GM10248 (cell line): ENCODE measurements at regions of chr1 and their contacts with region 1.

Region 1: GRCh38 chr1:43073490-43074230 is 98.4 kb downstream of the EBNA1BP2 start:
- DNase-seq: peak; percentile 79
- CTCF ChIP-seq: peak; percentile 81

Region 2: GRCh38 chr1:42576935-42577334 is 496.7 kb before region 1 on chr1:
- CTCF ChIA-PET with region 1: interaction called, 12 read pairs
- POLR2A ChIA-PET with region 1: no interaction called
- DNase-seq: no peak
- CTCF ChIP-seq: no peak

Region 3: DNA sequence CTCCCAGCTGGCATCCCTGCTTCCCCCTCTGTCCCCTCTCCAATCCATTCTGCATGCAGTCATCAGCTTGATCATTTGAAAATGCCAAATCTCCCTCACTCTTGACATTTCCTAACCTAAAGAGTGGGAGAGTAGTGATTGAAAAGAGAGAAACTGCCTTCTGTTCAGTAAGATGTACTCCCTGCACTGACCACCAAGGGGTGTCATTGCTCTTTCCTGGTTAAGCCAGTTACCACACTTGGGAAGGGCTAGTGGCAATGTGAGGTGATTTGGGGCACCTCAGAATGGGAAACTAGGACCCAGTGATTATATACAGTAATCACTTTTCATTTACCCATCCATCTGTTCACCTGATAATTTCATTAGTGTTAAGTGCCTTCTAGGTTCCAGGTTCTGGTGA is 295.8 kb before region 1 on chr1:
- CTCF ChIA-PET with region 1: interaction called, 178 read pairs
- POLR2A ChIA-PET with region 1: no interaction called
- DNase-seq: peak; percentile 57
- CTCF ChIP-seq: peak; percentile 63

Region 4: DNA sequence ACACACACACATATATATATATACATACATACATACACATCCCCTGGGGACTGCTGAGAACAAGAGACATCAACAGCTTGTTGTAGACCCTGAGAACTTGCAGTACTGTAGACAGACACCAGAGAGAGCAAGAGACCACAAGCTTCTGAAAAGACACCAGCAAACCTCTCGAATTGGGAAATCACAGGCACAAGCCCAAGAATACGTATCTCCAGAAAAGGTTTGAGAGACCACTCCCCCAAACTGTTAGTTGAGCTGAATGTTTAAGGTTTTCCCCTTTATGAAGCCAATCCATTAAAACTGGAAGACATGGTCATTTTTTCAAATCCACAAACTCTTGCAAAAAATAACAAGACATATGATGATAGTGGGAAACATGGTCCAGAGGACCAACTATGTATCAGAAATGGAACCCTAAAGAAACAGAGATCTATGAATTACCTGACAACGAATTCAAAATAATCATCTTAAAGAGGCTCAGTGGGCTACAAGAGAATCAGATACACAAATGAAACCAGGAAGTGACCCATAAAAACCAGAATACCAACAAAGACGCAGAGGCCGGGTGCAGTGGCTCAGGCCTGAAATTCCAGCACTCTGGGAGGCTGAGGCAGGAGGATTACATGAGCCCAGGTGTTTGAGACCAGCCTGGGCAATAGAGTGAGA is 160.1 kb before region 1 on chr1:
- CTCF ChIA-PET with region 1: interaction called, 285 read pairs
- POLR2A ChIA-PET with region 1: no interaction called
- DNase-seq: peak; percentile 60
- CTCF ChIP-seq: peak; percentile 62

Region 5: GRCh38 chr1:42958488-42959319 is 115.0 kb before region 1 on chr1 and contains the start of gene SLC2A1:
- CTCF ChIA-PET with region 1: interaction called, 10 read pairs
- POLR2A ChIA-PET with region 1: no interaction called
- DNase-seq: peak; percentile 98
- CTCF ChIP-seq: no peak

Region 6: GRCh38 chr1:43104027-43104763 is 30.5 kb after region 1 on chr1:
- CTCF ChIA-PET with region 1: interaction called, 15 read pairs
- POLR2A ChIA-PET with region 1: no interaction called
- DNase-seq: no peak
- CTCF ChIP-seq: no peak

Region 7: DNA sequence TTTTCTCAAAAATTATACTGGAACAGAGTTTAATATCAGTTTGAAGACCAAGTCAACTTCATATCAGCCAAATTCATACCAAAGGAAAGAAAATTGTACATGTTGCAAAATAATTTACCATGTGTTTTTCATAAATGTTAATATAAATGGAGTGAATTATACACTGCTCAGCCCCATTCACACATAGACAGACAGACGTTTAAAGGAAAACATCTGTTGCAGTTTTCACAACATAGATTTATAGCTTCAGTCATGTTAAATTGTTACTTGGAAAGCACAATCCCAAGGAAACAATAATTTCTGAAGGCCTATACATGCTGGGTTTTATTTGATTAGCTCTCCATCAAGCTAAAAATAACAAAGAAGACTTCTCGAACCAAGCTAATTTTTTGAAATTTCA is 407.8 kb after region 1 on chr1:
- CTCF ChIA-PET with region 1: no interaction called
- POLR2A ChIA-PET with region 1: no interaction called
- DNase-seq: no peak
- CTCF ChIP-seq: no peak